H1 (cell line): ENCODE measurements at regions of chr12 and their contacts with region 1.

Region 1: DNA sequence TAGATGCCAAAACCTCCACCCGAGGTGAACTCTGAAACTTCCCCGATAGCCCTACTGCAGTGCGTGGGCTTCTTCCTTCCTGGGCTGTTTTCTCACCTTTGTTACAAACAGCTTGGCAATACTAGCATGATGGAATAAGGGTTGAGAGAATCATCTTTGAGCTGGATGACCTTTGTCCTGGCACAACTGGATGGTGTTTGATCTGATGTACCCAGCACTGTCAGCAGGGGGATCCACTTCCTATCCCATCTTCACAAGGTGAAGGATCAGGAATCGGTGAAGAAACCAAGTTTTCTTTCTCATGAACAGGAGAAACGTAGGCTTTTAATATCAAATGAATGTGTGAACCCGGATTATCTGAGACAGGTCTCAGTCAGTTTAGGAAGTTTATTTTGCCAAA is 19.5 kb upstream of the LRRC10 start:
- DNase-seq: no peak
- H3K4me3 ChIP-seq: no peak overlapping the region
- H3K27ac ChIP-seq: no peak overlapping the region
- H3K4me1 ChIP-seq: peaks cover 0 to 4% (median 1%) of the 10 kb centered on the region in 4 experiments; a peak in 2 of 7 replicates
- H3K27me3 ChIP-seq: no peaks in the 10 kb centered on the region
- CTCF ChIP-seq: peak; percentile 49 to 69 (median 52)
- EP300 ChIP-seq: no peak
- POLR2A ChIP-seq: no peak
- RAD21 ChIP-seq: peak; percentile 42 to 55; a peak in 3 of 4 replicates

Region 2: DNA sequence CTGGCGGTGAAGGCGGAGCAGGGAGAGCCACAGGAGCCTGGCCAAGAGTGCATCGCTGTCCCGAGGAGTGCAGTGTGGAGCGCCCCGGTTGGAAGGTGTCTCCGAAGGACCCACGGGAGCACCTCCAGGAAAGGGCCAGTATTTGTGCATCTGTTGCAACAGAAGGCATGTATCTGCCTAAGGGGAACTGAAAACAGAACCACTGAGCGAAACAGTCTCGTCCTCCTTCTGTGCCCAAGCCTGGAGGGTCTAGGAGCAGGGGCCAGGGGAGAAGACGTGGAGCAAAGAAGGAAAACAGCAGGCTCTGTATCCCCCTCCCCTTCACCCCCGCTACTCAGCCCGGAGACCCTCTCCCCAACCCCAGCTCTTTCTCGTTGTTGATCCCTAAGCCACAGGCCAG is 14.2 kb before region 1 on chr12:
- CTCF ChIA-PET with region 1: interaction called, 67 read pairs
- POLR2A ChIA-PET with region 1: no interaction called
- DNase-seq: no peak
- H3K4me3 ChIP-seq: no peak overlapping the region
- H3K27ac ChIP-seq: no peak overlapping the region
- H3K4me1 ChIP-seq: no peaks in the 10 kb centered on the region
- H3K27me3 ChIP-seq: no peaks in the 10 kb centered on the region; a peak in 1 of 7 replicates
- CTCF ChIP-seq: no peak
- EP300 ChIP-seq: no peak
- POLR2A ChIP-seq: no peak
- RAD21 ChIP-seq: no peak

Region 3: DNA sequence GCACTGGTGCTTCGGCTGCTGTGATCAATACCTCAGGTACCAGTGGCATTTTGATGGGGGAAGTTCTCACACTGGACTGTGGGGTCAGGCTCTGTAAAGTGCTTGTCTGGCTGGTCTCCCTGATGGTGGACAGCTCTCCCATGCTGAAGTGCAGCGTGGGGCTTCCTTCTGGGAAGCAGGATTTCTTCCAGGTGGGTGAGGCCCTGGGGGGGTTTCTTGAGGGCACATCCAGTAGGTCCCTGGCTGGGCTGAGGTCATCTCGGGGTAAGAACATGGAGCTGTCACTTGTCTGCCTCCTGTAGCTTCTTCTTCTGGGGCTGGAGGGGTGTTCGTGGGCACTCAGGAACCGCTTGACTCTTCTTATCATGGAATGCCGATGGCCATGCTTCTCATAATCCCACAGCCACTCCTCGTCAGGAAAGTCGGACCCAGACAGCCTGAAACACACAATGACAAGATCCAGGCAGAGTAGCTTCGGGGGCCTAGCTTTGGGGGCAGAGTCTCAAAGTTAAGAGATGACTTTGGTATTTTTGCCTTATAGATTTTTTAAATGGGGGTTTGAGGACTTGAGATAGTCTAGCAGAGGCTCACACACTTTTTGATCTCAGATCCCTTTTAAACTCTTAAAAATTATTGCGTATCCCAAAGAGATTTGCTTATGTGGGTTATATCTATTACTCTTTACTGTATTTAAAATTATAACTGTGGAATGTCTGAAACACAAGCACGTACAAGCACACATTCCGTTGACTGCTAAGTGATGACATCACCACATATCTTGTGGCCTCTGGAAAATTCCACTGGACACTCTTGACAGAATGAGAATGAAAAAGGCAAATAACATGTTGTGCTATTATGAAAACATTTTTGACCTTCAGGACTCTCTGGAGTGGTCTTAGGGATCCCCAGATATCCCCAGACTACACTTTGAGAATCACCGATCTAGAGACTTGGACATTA is 25.5 kb after region 1 on chr12:
- CTCF ChIA-PET with region 1: interaction called, 12 read pairs
- POLR2A ChIA-PET with region 1: no interaction called
- DNase-seq: no peak
- H3K4me3 ChIP-seq: no peak overlapping the region
- H3K27ac ChIP-seq: no peak overlapping the region
- H3K4me1 ChIP-seq: no peaks in the 10 kb centered on the region
- H3K27me3 ChIP-seq: peaks cover 0 to 2% (median 0%) of the 10 kb centered on the region in 4 experiments; a peak in 2 of 7 replicates
- CTCF ChIP-seq: no peak
- EP300 ChIP-seq: no peak
- POLR2A ChIP-seq: no peak
- RAD21 ChIP-seq: no peak

Region 4: GRCh38 chr12:69837191-69837590 is 207.0 kb after region 1 on chr12:
- CTCF ChIA-PET with region 1: no interaction called
- POLR2A ChIA-PET with region 1: no interaction called
- DNase-seq: no peak
- H3K4me3 ChIP-seq: no peak overlapping the region
- H3K27ac ChIP-seq: no peak overlapping the region
- H3K4me1 ChIP-seq: no peaks in the 10 kb centered on the region; a peak in 1 of 7 replicates
- H3K27me3 ChIP-seq: no peaks in the 10 kb centered on the region
- CTCF ChIP-seq: peak in 1 of 3 experiments; percentile 1; a peak in 1 of 4 replicates
- EP300 ChIP-seq: no peak
- POLR2A ChIP-seq: no peak
- RAD21 ChIP-seq: no peak